ENCODE measurements at regions of chr17 and their contacts with region 1.

Region 1: DNA sequence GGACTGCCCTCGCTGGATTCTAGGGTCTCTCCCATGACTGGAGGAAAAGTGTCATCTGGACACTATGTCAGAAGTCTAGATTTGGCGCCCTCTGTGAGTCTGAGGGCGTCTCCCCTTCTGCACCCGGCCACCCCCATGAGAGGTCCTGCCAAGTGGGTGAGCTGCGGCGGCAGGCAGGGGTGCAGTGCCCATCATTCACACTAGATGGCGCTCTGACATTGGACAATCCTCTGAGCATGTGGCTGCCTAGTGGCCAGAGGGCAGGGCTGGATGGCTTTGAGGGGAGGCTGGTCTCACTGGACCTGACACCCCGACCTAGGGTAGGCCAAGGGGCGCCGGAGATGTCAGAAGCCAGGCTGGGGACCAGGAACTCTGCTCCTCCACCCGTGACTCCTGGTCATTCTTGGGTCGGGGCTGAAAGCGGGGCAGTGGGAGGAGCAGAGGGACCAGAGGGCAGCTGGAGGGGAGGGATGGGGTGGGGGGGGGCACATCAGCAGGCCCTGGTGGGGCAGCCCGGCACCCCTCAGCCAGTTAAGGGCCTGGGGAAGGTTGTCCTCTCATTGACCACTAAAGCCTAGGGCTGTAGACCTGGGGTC is 28.0 kb downstream of the MRM1 start:
- DNase-seq: peak; percentile 79 to 92
- ATAC-seq: peak; percentile 86
- H3K4me3 ChIP-seq: no peak overlapping the region
- H3K27ac ChIP-seq: no peak overlapping the region
- H3K4me1 ChIP-seq: no peaks in the 10 kb centered on the region
- H3K27me3 ChIP-seq: no peaks in the 10 kb centered on the region

Region 2: GRCh38 chr17:36566081-36566480 is 63.3 kb before region 1 on chr17:
- intact Hi-C with region 1: no loop called
- DNase-seq: no peak
- ATAC-seq: no peak
- H3K4me3 ChIP-seq: no peak overlapping the region
- H3K27ac ChIP-seq: no peak overlapping the region
- H3K4me1 ChIP-seq: no peaks in the 10 kb centered on the region
- H3K27me3 ChIP-seq: no peaks in the 10 kb centered on the region

Region 3: GRCh38 chr17:36717088-36717487 is 87.7 kb after region 1 on chr17:
- intact Hi-C with region 1: no loop called
- DNase-seq: no peak
- ATAC-seq: no peak
- H3K4me3 ChIP-seq: no peak overlapping the region
- H3K27ac ChIP-seq: no peak overlapping the region
- H3K4me1 ChIP-seq: no peaks in the 10 kb centered on the region
- H3K27me3 ChIP-seq: no peaks in the 10 kb centered on the region

Region 4: DNA sequence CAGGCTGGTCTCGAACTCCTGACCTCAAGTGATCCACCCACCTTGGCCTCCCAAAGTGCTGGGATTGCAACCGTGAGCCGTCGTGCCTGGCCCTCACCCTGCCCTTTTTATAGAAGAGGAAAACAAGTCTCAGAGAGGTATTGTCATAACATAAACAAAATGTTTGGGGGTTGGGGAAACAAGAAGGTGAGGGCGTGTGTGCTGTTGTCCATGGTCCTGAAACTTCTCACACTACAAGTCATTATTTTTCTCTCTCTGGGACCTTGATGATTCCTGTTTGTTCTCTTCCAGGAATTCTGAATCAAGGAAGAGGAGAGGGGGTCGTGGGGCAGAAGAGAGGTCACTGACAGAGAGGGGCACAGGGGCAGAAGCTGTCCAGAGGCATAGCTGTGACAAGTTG is 147.8 kb after region 1 on chr17:
- intact Hi-C with region 1: no loop called
- DNase-seq: no peak
- ATAC-seq: no peak
- H3K4me3 ChIP-seq: no peak overlapping the region
- H3K27ac ChIP-seq: no peak overlapping the region
- H3K4me1 ChIP-seq: no peaks in the 10 kb centered on the region
- H3K27me3 ChIP-seq: no peaks in the 10 kb centered on the region

Region 5: GRCh38 chr17:37239690-37240334 is 610.5 kb after region 1 on chr17:
- intact Hi-C with region 1: loop called in 1 of 2 experiments (anchors 10 kb)
- DNase-seq: no peak
- ATAC-seq: no peak
- H3K4me3 ChIP-seq: no peak overlapping the region
- H3K27ac ChIP-seq: no peak overlapping the region
- H3K4me1 ChIP-seq: no peaks in the 10 kb centered on the region
- H3K27me3 ChIP-seq: no peaks in the 10 kb centered on the region

Measured in aorta (tissue), 5 donors.